Caco-2 (cell line): ENCODE measurements at regions of chr13 and their contacts with region 1.

Region 1: DNA sequence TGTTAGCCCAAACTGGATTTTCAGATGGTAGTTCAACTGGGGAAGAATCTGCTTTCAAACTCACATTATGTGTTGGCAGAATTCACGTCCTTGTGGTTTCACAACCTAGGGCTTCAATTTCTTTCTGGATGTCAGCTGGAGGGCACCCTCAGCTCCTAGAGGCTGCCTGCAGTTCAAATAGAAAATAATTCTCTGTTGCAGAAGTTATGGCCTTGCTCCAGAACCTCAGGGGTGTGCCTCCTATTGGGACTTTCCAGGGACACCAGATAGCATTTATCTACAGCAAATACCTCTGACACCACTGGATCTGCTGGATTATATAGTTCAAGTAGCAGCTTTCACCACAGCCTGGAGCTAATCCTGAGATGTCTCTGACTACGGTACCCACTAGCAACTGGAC is 11.8 kb upstream of the RB1 start:
- DNase-seq: peak in 1 of 2 experiments; percentile 14
- H3K4me3 ChIP-seq: no peak overlapping the region
- H3K4me3 Mint-ChIP-seq: no peak overlapping the region
- H3K27ac Mint-ChIP-seq: no peak overlapping the region
- H3K4me1 ChIP-seq: peaks cover 40% of the 10 kb centered on the region
- H3K4me1 Mint-ChIP-seq: peaks cover 17% of the 10 kb centered on the region
- H3K27me3 ChIP-seq: no peaks in the 10 kb centered on the region
- H3K27me3 Mint-ChIP-seq: no peaks in the 10 kb centered on the region
- CTCF ChIP-seq: no peak

Region 2: DNA sequence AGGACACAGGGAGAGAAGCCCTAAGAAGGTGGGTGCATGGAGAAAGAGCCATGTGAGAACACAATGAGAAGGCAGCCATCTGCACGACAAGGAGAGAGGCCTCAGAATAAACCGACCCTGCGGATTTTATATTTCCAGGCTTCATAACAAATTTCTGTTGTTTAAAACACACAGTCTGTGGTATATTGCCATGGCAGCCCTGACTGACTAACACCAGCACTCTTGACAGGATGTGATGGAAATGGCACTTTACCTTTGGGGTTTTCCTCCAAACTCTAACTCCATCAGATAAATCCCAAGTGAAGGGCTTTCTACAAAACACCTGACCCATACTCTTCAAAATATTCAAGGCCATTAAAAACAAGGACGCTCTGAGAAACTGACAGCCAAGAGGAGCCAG is 183.6 kb before region 1 on chr13:
- CTCF ChIA-PET with region 1: no interaction called
- POLR2A ChIA-PET with region 1: no interaction called
- intact Hi-C with region 1: no loop called
- DNase-seq: no peak
- H3K4me3 ChIP-seq: no peak overlapping the region
- H3K4me3 Mint-ChIP-seq: no peak overlapping the region
- H3K27ac Mint-ChIP-seq: no peak overlapping the region
- H3K4me1 ChIP-seq: no peaks in the 10 kb centered on the region
- H3K4me1 Mint-ChIP-seq: no peaks in the 10 kb centered on the region
- H3K27me3 ChIP-seq: no peaks in the 10 kb centered on the region
- H3K27me3 Mint-ChIP-seq: peaks cover 4% of the 10 kb centered on the region
- CTCF ChIP-seq: no peak

Region 3: GRCh38 chr13:48258002-48258401 is 33.7 kb before region 1 on chr13:
- CTCF ChIA-PET with region 1: no interaction called
- POLR2A ChIA-PET with region 1: no interaction called
- intact Hi-C with region 1: loop called (anchors 2 kb)
- DNase-seq: peak in 1 of 2 experiments; percentile 43
- H3K4me3 ChIP-seq: no peak overlapping the region
- H3K4me3 Mint-ChIP-seq: no peak overlapping the region
- H3K27ac Mint-ChIP-seq: no peak overlapping the region
- H3K4me1 ChIP-seq: peaks cover 15% of the 10 kb centered on the region
- H3K4me1 Mint-ChIP-seq: peaks cover 14% of the 10 kb centered on the region
- H3K27me3 ChIP-seq: no peaks in the 10 kb centered on the region
- H3K27me3 Mint-ChIP-seq: no peaks in the 10 kb centered on the region
- CTCF ChIP-seq: no peak

Region 4: DNA sequence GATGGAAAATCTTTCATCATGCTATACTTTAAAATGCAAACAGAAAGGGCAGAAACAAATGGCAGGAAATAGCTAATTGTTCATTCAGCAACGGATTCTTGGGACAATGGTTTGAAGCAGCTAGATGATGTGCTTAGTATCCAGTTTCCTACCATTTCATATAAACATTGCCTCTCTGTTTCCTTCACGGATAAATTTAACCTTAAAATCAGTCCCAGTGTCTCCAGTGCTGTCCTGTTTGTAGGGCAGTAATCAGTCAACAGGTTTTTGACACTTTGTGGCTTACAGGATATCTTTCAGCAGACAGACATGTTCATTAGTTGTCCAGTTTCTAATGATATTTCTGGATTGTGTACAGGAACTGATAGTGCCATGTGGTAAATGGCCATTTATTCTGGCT is 12.9 kb before region 1 on chr13:
- CTCF ChIA-PET with region 1: no interaction called
- POLR2A ChIA-PET with region 1: no interaction called
- intact Hi-C with region 1: loop called (anchors 2 kb)
- DNase-seq: no peak
- H3K4me3 ChIP-seq: no peak overlapping the region
- H3K4me3 Mint-ChIP-seq: no peak overlapping the region
- H3K27ac Mint-ChIP-seq: no peak overlapping the region
- H3K4me1 ChIP-seq: no peaks in the 10 kb centered on the region
- H3K4me1 Mint-ChIP-seq: no peaks in the 10 kb centered on the region
- H3K27me3 ChIP-seq: no peaks in the 10 kb centered on the region; the same call in 1 of the 2 replicates
- H3K27me3 Mint-ChIP-seq: peaks cover 2% of the 10 kb centered on the region
- CTCF ChIP-seq: no peak